GM18951 (cell line): ENCODE measurements at regions of chrX and their contacts with region 1.

Region 1: GRCh38 chrX:104136241-104137019 is 20.4 kb downstream of the SLC25A53 start:
- POLR2A ChIP-seq: no peak

Region 2: GRCh38 chrX:103845165-103845653 is 291.2 kb before region 1 on chrX:
- in situ Hi-C with region 1: loop called (anchors 25 kb)
- POLR2A ChIP-seq: no peak

Region 3: GRCh38 chrX:103941201-103941975 is 195.0 kb before region 1 on chrX:
- in situ Hi-C with region 1: no loop called
- POLR2A ChIP-seq: no peak